Activated CD4-positive, alpha-beta T cell treated with anti-CD3 and anti-CD28 coated beads for 36 hours (primary cell): ENCODE measurements at regions of chr19 and their contacts with region 1.

Region 1: GRCh38 chr19:796692-797527 is at the start of gene PTBP1:
- DNase-seq: peak; percentile 100
- ATAC-seq: peak; percentile 86
- H3K4me3 Mint-ChIP-seq: peak within 1 kb of the TSS; percentile 93
- H3K27ac Mint-ChIP-seq: peak within 1 kb of the TSS; percentile 95
- H3K4me1 Mint-ChIP-seq: peaks cover 25% of the 10 kb centered on the region
- H3K27me3 Mint-ChIP-seq: no peaks in the 10 kb centered on the region
- total RNA-seq, gene PTBP1: 584 to 738 TPM

Region 2: DNA sequence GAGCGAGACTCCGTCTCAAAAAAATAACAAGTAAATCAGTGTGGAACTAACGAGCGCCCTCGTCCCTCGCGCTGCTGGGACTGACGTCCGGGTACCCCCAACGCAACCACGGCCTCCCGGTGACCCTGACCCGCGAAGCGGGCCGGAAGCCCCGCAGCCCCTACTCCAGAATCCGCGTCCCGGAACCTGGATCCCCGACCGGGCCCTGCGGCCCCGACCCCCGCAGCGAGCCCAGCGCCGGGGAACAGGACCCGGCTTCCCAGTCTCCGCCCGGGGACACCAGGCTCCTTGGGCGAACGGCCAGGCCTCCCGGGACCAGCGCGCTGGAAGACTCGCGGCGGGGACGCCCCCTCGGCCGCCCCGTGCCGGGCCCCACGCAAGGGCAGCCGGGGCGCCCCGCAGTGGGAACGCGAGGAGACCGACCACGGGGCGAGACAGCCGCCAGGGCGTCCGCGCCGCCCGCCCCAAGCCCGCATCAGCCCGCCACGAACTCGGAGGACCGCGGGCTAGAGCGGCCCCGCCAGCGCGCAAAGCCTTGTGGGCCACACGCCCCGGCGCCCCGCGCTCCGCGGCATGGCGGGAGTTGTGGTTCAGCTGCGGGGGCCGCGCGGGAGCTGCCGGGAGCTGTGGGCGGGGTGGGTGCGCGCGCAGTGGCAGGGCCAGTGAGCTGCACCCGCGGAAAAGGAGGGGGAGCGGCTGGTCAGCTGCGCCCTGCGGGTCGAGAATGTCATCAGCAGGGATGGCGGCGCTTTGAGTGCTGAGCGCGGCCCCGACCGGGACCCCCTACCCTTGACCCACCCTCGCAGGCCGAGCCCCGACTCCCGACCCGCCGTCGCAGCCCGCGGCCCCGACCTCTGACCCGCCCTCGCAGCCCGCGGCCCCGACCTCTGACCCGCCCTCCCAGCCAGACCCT is 308.1 kb before region 1 on chr19:
- CTCF ChIA-PET with region 1: no interaction called
- POLR2A ChIA-PET with region 1: no interaction called
- intact Hi-C with region 1: no loop called
- DNase-seq: peak; percentile 93
- ATAC-seq: peak; percentile 91
- H3K4me3 Mint-ChIP-seq: peak overlapping the region; percentile 71
- H3K27ac Mint-ChIP-seq: peak overlapping the region; percentile 75
- H3K4me1 Mint-ChIP-seq: peaks cover 2% of the 10 kb centered on the region
- H3K27me3 Mint-ChIP-seq: peaks cover 10% of the 10 kb centered on the region

Region 3: DNA sequence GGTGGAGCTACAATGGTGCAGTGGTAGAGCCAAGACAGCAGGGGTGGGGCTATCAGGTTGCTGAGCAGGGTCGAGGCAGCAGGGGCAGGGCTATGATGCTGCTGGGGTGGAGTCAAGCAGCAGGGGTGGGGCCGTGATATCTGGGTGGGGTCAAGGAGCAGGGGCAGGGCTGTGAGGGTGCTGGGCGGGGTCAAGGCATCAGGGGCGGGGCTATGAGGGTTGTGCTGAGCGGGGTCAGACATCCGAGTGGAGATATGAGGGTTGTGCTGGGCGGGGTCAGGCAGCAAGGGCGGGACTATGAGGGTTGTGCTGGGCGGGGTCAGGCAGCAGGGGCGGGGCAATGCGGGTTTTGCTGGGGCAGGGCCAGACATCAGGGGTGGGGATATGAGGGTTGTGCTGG is 192.6 kb before region 1 on chr19:
- CTCF ChIA-PET with region 1: no interaction called
- POLR2A ChIA-PET with region 1: no interaction called
- intact Hi-C with region 1: no loop called
- DNase-seq: peak; percentile 82
- ATAC-seq: peak; percentile 87
- H3K4me3 Mint-ChIP-seq: no peak overlapping the region
- H3K27ac Mint-ChIP-seq: no peak overlapping the region
- H3K4me1 Mint-ChIP-seq: no peaks in the 10 kb centered on the region
- H3K27me3 Mint-ChIP-seq: no peaks in the 10 kb centered on the region

Region 4: DNA sequence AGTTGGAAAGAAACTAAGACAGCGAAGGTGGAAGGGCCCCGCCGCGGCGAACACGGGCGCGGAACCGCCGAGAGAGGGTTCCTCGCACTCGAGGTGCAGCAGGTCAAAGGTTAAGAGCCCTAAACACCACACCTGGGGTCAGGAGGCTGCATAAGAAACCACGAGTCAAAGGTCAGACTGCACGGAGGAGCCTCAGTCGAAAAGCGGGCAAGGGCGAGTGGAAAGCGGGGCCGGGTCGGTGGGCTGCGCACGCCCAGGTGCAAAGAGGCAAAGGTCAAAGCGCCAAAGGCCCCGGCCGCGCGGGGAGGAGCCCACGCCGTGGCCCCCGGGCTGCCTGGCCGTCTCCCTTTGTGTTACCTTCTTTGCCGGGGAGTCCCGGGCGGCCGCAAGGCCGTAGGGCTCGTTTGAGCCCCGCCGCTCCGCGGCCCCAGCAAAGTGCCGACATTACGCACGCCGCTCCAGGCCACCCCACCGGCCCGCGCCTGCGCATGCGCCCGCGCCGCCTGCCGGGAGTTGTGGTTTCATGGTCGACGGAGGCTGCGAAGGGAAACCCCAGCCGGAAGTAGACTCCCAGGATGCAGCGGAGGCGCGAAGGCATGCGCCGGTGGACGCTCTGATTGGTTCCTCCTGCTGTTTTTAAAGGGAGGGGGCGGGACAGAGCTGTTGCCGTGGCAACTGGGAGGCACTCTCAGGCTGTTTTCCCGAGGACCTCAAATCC is 163.7 kb before region 1 on chr19 and contains the start of gene POLRMT:
- CTCF ChIA-PET with region 1: no interaction called
- POLR2A ChIA-PET with region 1: no interaction called
- intact Hi-C with region 1: loop called in 1 of 2 experiments (anchors 1 kb)
- DNase-seq: peak; percentile 98
- ATAC-seq: peak; percentile 98
- H3K4me3 Mint-ChIP-seq: peak within 1 kb of the TSS; percentile 97
- H3K27ac Mint-ChIP-seq: peak within 1 kb of the TSS; percentile 91
- H3K4me1 Mint-ChIP-seq: peaks cover 29% of the 10 kb centered on the region
- H3K27me3 Mint-ChIP-seq: no peaks in the 10 kb centered on the region
- total RNA-seq, gene POLRMT: 69.0 to 77.4 TPM

Region 5: GRCh38 chr19:814258-815078 is 17.6 kb after region 1 on chr19:
- CTCF ChIA-PET with region 1: no interaction called
- POLR2A ChIA-PET with region 1: interaction called, 7 read pairs
- intact Hi-C with region 1: loop called in 1 of 2 experiments (anchors 2 kb)
- DNase-seq: no peak
- ATAC-seq: peak; percentile 16
- H3K4me3 Mint-ChIP-seq: no peak overlapping the region
- H3K27ac Mint-ChIP-seq: no peak overlapping the region
- H3K4me1 Mint-ChIP-seq: no peaks in the 10 kb centered on the region
- H3K27me3 Mint-ChIP-seq: no peaks in the 10 kb centered on the region

Region 6: DNA sequence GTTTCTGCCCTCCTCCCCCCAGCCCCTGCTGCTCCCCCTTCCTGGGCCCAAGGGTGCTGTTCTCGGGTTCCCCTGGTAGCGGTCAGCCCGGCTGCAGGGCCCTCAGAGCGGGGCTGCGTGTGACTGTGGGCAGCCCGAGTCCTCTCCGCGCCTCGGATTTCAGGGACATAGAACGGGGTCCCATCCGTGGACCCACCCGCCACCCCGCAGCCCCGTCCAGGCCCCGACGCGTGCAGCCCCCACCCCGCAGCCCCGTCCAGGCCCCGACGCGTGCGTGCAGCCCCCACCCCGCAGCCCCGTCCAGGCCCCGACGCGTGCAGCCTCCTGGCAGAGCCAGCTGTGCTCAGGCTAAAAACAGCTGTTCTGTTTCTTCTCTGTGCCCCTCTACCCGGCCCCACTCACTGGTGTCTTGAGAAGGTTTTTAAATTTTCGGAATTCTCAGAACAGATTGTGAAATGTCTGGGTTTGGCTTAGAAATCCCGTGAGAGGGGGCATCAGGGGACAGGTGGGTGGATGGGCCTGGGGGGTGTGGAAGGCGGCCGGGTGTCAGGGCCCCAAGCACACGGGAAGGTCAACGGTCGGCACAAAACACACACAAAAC is 38.4 kb after region 1 on chr19:
- CTCF ChIA-PET with region 1: no interaction called
- POLR2A ChIA-PET with region 1: no interaction called
- intact Hi-C with region 1: no loop called
- DNase-seq: no peak
- ATAC-seq: no peak
- H3K4me3 Mint-ChIP-seq: no peak overlapping the region
- H3K27ac Mint-ChIP-seq: no peak overlapping the region
- H3K4me1 Mint-ChIP-seq: no peaks in the 10 kb centered on the region
- H3K27me3 Mint-ChIP-seq: peaks cover 9% of the 10 kb centered on the region

Region 7: GRCh38 chr19:984165-984967 is 187.5 kb after region 1 on chr19 and contains the start of gene WDR18:
- CTCF ChIA-PET with region 1: no interaction called
- POLR2A ChIA-PET with region 1: no interaction called
- intact Hi-C with region 1: loop called in 1 of 2 experiments (anchors 1 kb)
- DNase-seq: peak; percentile 95
- ATAC-seq: peak; percentile 92
- H3K4me3 Mint-ChIP-seq: peak within 1 kb of the TSS; percentile 91
- H3K27ac Mint-ChIP-seq: peak within 1 kb of the TSS; percentile 86
- H3K4me1 Mint-ChIP-seq: peaks cover 14% of the 10 kb centered on the region
- H3K27me3 Mint-ChIP-seq: no peaks in the 10 kb centered on the region
- total RNA-seq, gene WDR18: 71.6 to 87.8 TPM

Region 8: GRCh38 chr19:1205114-1206062 is 408.5 kb after region 1 on chr19 and contains the start of gene STK11:
- CTCF ChIA-PET with region 1: no interaction called
- POLR2A ChIA-PET with region 1: interaction called, 6 read pairs
- intact Hi-C with region 1: loop called in 1 of 2 experiments (anchors 1 kb)
- DNase-seq: peak; percentile 100
- ATAC-seq: peak; percentile 97
- H3K4me3 Mint-ChIP-seq: peak within 1 kb of the TSS; percentile 93
- H3K27ac Mint-ChIP-seq: peak within 1 kb of the TSS; percentile 77
- H3K4me1 Mint-ChIP-seq: peaks cover 23% of the 10 kb centered on the region
- H3K27me3 Mint-ChIP-seq: no peaks in the 10 kb centered on the region
- total RNA-seq, gene STK11: 49.2 to 61.5 TPM

Region 9: DNA sequence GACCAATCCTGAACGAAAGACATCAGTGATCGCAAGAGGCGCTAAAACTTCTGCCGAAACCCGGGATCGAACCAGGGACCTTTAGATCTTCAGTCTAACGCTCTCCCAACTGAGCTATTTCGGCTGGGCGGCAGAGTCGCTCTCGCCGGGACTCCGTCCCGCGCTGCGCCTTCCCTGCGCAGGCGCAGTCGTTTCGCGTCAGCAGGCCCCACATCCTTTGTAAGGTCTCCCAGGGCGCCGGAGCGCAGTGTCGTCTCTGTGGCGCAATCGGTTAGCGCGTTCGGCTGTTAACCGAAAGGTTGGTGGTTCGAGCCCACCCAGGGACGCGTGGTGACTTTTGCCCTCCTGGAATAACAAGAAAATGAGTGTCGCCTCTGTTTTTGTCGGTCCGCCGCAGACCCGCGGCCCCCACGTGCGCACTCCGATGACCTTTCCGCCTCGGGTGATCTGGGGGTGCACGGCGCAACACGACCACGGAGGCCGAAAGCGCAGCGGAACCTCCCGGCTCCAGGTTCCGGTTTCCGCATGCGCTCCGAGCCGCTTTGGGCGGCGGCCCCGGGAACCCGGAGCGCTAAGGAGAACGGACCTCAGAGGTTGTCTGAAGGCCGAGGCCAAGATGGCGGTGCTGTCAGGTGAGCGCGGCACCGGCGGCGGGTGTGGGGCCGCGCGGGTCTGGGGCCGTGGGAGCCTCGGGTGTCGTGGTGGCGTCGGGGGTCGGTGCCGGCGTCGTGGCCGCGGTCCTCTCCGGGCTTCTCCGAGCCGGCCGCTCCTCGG is 586.6 kb after region 1 on chr19 and contains the start of gene NDUFS7:
- CTCF ChIA-PET with region 1: no interaction called
- POLR2A ChIA-PET with region 1: no interaction called
- intact Hi-C with region 1: loop called in 1 of 2 experiments (anchors 1 kb)
- DNase-seq: peak; percentile 94
- ATAC-seq: peak; percentile 88
- H3K4me3 Mint-ChIP-seq: peak within 1 kb of the TSS; percentile 81
- H3K27ac Mint-ChIP-seq: peak within 1 kb of the TSS; percentile 92
- H3K4me1 Mint-ChIP-seq: peaks cover 21% of the 10 kb centered on the region
- H3K27me3 Mint-ChIP-seq: peaks cover 2% of the 10 kb centered on the region
- total RNA-seq, gene NDUFS7: 93.4 to 113 TPM